ENCODE measurements at regions of chr6 and their contacts with region 1.

Region 1: GRCh38 chr6:70566751-70567382 is at the start of gene SDHAF4:
- DNase-seq: peak; percentile 86 to 98 (median 96)

Region 2: DNA sequence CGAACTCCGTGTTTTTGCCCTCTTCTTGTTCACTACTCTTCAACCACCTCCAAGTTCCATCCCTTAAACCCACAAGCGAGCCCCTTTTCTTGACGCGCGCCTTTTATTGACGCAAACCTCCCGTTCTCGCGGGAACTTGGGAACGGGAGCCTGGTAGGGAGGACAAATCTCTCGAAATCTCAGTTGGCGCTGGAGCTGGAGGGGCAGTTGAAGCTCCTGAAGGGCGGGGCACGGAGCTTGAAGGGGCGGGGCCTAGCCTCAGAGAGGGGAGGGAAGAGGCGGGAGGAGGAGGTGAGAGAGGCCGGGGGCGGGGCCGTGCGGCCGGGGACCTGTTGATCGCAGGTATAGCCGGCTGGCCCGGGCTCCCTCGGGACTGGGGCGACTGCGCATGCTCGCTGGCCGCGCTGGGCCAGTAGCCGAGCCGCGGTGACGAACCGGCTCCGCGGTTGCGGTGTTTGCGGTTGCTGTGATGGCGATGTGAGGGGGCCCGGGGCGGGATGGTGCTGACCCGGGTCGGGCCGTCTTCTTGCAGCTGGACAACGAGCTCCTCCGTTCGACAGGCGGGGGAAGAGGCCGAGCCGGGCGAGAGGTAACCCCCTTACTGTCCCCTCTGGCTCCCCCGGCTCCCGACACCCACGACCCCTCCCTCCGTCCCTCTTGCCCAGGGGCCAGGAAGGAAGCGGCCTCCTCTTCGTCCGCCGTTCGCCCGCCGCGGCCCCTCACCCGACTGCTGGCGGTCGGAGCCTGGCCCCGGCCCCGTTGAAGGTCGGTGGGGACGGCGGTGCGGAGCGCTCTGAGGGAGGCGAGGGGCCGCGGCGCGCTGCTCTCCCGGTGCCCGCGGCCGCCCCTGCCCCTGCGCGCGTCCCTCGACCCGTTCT is 153.5 kb before region 1 on chr6 and contains the start of gene FAM135A:
- intact Hi-C with region 1: loop called (anchors 5 kb)
- DNase-seq: peak; percentile 86 to 99 (median 96)

Region 3: GRCh38 chr6:70507161-70507560 is 59.7 kb before region 1 on chr6:
- intact Hi-C with region 1: no loop called
- DNase-seq: no peak

Region 4: DNA sequence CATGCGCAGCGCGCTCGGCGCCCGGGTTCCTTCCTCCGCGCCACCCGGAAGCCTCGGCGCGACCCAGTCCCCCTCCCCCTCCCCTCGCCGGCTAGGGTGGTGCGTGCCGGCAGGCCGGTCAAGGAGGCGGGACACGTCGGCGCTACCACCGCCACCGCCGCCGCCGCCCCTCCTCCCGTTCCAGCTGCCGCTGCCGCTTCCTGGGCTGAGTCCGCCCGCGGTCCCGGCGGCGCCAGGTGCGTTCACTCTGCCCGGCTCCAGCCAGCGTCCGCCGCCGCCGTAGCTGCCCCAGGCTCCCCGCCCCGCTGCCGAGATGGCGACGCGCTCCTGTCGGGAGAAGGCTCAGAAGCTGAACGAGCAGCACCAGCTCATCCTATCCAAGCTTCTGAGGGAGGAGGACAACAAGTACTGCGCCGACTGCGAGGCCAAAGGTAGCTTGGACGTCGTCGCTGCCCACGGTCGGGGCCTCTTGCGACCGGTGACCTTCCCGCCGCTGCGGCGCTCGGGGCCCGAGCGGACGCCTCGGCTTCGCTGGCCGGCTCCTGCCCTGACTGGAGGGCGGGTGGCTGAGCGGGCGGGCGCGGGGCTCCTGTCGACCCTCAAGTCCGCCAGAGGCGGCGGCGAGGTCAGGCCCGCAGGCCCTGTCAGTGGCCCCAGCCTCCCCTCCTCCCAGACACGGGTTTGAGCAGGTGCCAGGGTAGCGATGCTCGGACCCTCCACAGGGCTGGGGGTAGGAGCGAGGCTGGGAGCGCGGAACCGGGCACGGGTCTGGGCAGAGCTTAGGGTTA is 101.0 kb after region 1 on chr6 and contains the start of gene SMAP1:
- intact Hi-C with region 1: loop called (anchors 5 kb)
- DNase-seq: peak; percentile 68 to 96 (median 92)